CD4-positive, alpha-beta T cell (primary cell): ENCODE measurements at regions of chr6 and their contacts with region 1.

Region 1: DNA sequence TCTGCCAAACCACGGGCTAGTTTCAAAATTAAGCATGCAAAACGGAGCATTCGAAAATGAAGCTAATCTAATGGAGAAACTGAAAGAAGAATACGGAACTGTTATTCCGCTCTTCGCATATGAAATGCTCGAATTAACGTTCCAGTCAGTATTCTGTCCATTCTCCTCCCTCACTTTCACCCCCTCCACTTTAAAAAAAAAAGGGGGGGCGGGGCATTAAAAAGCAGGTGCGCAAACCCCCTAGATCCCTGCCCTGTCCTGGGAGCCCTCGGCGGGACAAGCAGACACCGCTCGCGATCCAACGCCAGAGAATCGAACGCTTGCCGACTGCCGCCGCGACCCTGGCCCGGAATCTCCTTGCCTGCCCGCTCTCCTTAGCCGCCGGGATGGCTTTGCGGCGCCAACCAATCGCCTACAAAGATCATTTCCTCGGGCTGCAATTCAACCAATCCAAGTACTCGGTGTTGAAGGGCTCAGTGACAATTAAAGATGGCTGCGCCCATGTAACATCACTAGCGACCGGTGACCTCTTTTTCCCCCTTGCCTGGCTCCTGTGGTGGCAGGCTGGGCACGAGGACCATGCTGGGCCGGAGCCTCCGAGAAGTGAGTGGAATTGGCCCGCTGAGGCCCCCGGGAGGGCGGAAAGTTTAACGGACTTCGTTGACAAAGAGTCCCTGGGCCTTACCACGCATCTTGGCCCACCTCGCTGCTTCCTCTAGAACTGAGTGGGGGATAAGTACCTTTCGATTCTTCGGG is at the starts of genes QRSL1 and RTN4IP1:
- DNase-seq: peak; percentile 67 to 95 (median 78)
- ATAC-seq: peak; percentile 94
- H3K4me3 ChIP-seq: peak within 1 kb of the TSS; percentile 79
- H3K4me3 Mint-ChIP-seq: peak within 1 kb of the TSS; percentile 97
- H3K27ac ChIP-seq: peak within 1 kb of the TSS; percentile 64 to 83
- H3K27ac Mint-ChIP-seq: peak within 1 kb of the TSS; percentile 96
- H3K4me1 ChIP-seq: peaks cover 15% of the 10 kb centered on the region
- H3K4me1 Mint-ChIP-seq: peaks cover 42% of the 10 kb centered on the region
- H3K27me3 ChIP-seq: no peaks in the 10 kb centered on the region
- H3K27me3 Mint-ChIP-seq: no peaks in the 10 kb centered on the region
- CTCF ChIP-seq: no peak
- total RNA-seq, gene QRSL1: 7.3 to 9.3 TPM
- total RNA-seq, gene RTN4IP1: 2.4 to 2.5 TPM

Region 2: GRCh38 chr6:105591053-105591452 is 1038.2 kb before region 1 on chr6:
- CTCF ChIA-PET with region 1: no interaction called
- POLR2A ChIA-PET with region 1: no interaction called
- intact Hi-C with region 1: no loop called
- DNase-seq: peak in 3 of 14 experiments; percentile 41 to 67 (median 61)
- ATAC-seq: peak; percentile 21
- H3K4me3 ChIP-seq: no peak overlapping the region
- H3K4me3 Mint-ChIP-seq: no peak overlapping the region
- H3K27ac ChIP-seq: no peak overlapping the region
- H3K27ac Mint-ChIP-seq: no peak overlapping the region
- H3K4me1 ChIP-seq: peaks cover 23% of the 10 kb centered on the region
- H3K4me1 Mint-ChIP-seq: peaks cover 28% of the 10 kb centered on the region
- H3K27me3 ChIP-seq: no peaks in the 10 kb centered on the region
- H3K27me3 Mint-ChIP-seq: no peaks in the 10 kb centered on the region
- CTCF ChIP-seq: no peak

Region 3: DNA sequence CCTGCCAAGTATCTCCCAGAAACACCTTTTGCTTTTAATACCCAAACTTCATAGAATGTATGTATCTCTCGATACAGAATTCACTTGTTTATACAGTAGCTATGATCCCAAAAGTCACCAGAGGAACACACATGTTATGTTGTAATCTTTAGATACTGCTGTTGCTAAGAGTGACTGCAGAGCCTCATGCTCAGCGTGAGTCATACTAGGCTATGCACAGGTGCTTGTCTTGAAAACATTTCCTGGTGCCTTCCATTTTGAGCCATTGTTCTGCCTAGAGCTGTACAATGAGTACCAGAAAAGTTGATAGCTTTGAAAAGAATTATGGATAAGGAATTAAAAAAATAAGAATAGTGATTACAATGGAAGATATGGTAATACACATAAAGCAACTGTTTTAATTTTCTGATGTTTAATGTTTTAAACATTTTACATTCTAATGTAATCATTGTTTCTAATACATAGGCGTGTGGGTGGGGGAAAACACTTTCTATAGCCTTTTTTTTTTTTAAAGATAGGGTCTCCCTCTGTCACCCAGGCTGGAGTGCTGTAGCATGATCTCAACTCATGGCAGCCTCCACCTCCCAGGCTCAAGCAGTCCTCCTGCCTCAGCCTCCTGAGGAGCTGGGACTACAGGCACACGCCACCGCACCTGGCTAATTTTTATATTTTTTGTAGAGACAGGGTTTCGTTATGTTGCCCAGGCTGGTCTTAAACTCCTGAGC is 265.9 kb after region 1 on chr6:
- CTCF ChIA-PET with region 1: no interaction called
- POLR2A ChIA-PET with region 1: no interaction called
- intact Hi-C with region 1: no loop called
- DNase-seq: no peak
- ATAC-seq: no peak
- H3K4me3 ChIP-seq: no peak overlapping the region
- H3K4me3 Mint-ChIP-seq: no peak overlapping the region
- H3K27ac ChIP-seq: no peak overlapping the region
- H3K27ac Mint-ChIP-seq: no peak overlapping the region
- H3K4me1 ChIP-seq: no peaks in the 10 kb centered on the region
- H3K4me1 Mint-ChIP-seq: no peaks in the 10 kb centered on the region
- H3K27me3 ChIP-seq: peaks cover 0 to 10% of the 10 kb centered on the region in 2 experiments
- H3K27me3 Mint-ChIP-seq: peaks cover 45% of the 10 kb centered on the region
- CTCF ChIP-seq: no peak

Region 4: DNA sequence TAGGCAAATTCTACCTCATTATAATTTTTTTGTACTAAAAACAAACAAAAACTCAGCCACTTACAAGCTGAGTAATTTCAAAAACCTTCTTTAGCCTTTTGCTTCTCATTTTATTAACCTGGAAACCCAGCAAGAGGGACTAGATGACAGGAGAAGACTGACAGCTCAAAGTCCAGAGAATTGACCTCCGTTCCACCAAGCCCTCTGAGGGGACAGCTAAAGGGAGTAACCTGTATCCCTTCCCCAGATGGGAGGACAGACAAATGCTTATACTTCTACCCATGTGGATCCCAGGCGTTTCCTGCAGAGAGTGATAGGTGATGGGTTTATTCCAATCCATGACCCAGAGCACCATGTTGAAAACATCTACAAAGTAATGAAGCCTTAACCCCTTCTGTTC is 380.2 kb after region 1 on chr6:
- CTCF ChIA-PET with region 1: no interaction called
- POLR2A ChIA-PET with region 1: no interaction called
- intact Hi-C with region 1: no loop called
- DNase-seq: no peak
- ATAC-seq: no peak
- H3K4me3 ChIP-seq: no peak overlapping the region
- H3K4me3 Mint-ChIP-seq: no peak overlapping the region
- H3K27ac ChIP-seq: no peak overlapping the region
- H3K27ac Mint-ChIP-seq: no peak overlapping the region
- H3K4me1 ChIP-seq: no peaks in the 10 kb centered on the region
- H3K4me1 Mint-ChIP-seq: no peaks in the 10 kb centered on the region
- H3K27me3 ChIP-seq: no peaks in the 10 kb centered on the region
- H3K27me3 Mint-ChIP-seq: peaks cover 10% of the 10 kb centered on the region
- CTCF ChIP-seq: no peak

Region 5: GRCh38 chr6:107026965-107027364 is 397.7 kb after region 1 on chr6:
- CTCF ChIA-PET with region 1: no interaction called
- POLR2A ChIA-PET with region 1: no interaction called
- intact Hi-C with region 1: loop called in 1 of 2 experiments (anchors 5 kb)
- DNase-seq: no peak
- ATAC-seq: no peak
- H3K4me3 ChIP-seq: no peak overlapping the region
- H3K4me3 Mint-ChIP-seq: peak overlapping the region; percentile 76
- H3K27ac ChIP-seq: no peak overlapping the region
- H3K27ac Mint-ChIP-seq: no peak overlapping the region
- H3K4me1 ChIP-seq: peaks cover 22% of the 10 kb centered on the region
- H3K4me1 Mint-ChIP-seq: peaks cover 27% of the 10 kb centered on the region
- H3K27me3 ChIP-seq: no peaks in the 10 kb centered on the region
- H3K27me3 Mint-ChIP-seq: no peaks in the 10 kb centered on the region
- CTCF ChIP-seq: no peak

Region 6: GRCh38 chr6:107066697-107067659 is 437.7 kb after region 1 on chr6:
- CTCF ChIA-PET with region 1: no interaction called
- POLR2A ChIA-PET with region 1: no interaction called
- intact Hi-C with region 1: no loop called
- DNase-seq: no peak
- ATAC-seq: no peak
- H3K4me3 ChIP-seq: no peak overlapping the region
- H3K4me3 Mint-ChIP-seq: no peak overlapping the region
- H3K27ac ChIP-seq: no peak overlapping the region
- H3K27ac Mint-ChIP-seq: no peak overlapping the region
- H3K4me1 ChIP-seq: peaks cover 9% of the 10 kb centered on the region
- H3K4me1 Mint-ChIP-seq: peaks cover 17% of the 10 kb centered on the region
- H3K27me3 ChIP-seq: no peaks in the 10 kb centered on the region
- H3K27me3 Mint-ChIP-seq: no peaks in the 10 kb centered on the region
- CTCF ChIP-seq: no peak